ENCODE measurements at regions of chr2 and their contacts with region 1.

Region 1: DNA sequence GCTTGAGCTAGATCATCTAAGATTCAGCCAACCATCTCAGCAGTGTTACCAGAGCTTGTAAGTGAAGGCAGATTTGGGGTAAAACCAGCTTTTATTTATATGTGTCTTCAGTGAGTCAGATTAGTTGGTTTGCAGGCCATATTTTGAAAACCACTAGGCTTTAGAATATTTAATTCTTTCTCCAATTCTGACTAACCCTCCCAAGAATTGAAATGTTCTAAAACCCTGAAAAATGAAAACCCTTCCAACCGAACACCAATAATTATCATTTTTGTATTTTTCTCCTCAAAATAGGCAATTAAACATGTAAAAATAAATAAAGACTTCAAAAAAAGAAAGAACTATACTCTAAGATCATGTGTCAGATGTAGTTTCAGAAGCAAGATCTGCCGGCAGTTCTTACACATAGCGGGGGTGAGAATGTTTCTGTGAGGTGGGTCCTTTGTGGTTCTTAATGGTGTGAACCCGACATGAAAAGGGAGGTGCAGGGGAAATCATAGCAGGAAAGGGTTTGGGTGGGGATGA is 14.2 kb downstream of the PLEK start:
- DNase-seq: no peak
- H3K4me3 ChIP-seq: no peak overlapping the region
- H3K27ac ChIP-seq: peak overlapping the region in 6 of 8 donors; percentile 5 to 87 (median 56)
- H3K4me1 ChIP-seq: peaks cover 8 to 99% (median 76%) of the 10 kb centered on the region in 6 donors
- H3K27me3 ChIP-seq: no peaks in the 10 kb centered on the region
- CTCF ChIP-seq: no peak
- POLR2A ChIP-seq: no peak

Region 2: GRCh38 chr2:68317971-68318913 is 61.0 kb before region 1 on chr2:
- intact Hi-C with region 1: no loop called
- DNase-seq: no peak
- H3K4me3 ChIP-seq: peak overlapping the region; percentile 56 to 86 (median 66)
- H3K27ac ChIP-seq: peak overlapping the region; percentile 69 to 94 (median 92)
- H3K4me1 ChIP-seq: peaks cover 8 to 46% (median 28%) of the 10 kb centered on the region in 6 donors
- H3K27me3 ChIP-seq: peaks cover 0 to 36% (median 12%) of the 10 kb centered on the region in 7 donors
- CTCF ChIP-seq: no peak
- POLR2A ChIP-seq: no peak

Region 3: DNA sequence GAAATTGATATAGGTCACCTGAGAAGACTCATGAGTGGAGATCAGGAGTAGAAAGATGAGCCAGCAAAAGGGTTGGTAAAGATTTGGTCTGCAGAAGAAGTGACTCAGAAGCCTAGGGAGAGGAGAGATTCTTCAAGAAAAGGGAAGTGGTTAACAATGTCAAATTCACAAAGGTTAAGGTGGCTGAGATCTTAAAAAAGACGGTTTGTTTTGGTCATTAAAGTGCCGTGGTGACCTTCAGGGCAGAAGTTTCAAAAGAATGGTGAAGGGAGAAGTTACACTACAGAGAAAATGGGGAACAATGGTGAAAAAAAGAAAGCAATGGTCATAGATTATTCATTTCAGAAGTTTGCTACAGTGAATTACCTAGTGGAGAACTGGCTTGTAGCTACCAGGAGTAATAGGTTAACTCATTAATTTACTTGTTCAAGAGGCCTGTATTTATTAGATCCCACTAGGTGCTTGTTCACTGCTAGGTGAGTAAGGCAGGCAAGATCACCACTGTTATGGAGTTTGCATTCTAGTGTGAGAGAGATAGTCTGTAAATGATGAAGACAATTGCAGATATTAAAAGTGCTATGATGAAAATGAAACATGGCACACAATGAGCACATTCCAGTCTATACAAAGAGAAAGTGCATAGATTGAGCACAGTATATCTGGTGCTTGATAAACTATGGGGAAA is 44.9 kb after region 1 on chr2:
- intact Hi-C with region 1: loop called (anchors 10 kb)
- DNase-seq: no peak
- H3K4me3 ChIP-seq: peak overlapping the region in 1 of 8 donors; percentile 25
- H3K27ac ChIP-seq: peak overlapping the region; percentile 1 to 83 (median 73)
- H3K4me1 ChIP-seq: peaks cover 34 to 94% (median 71%) of the 10 kb centered on the region in 6 donors
- H3K27me3 ChIP-seq: no peaks in the 10 kb centered on the region
- CTCF ChIP-seq: no peak
- POLR2A ChIP-seq: no peak

Region 4: GRCh38 chr2:68506170-68506569 is 126.9 kb after region 1 on chr2:
- intact Hi-C with region 1: no loop called
- DNase-seq: no peak
- H3K4me3 ChIP-seq: no peak overlapping the region
- H3K27ac ChIP-seq: no peak overlapping the region
- H3K4me1 ChIP-seq: no peaks in the 10 kb centered on the region
- H3K27me3 ChIP-seq: no peaks in the 10 kb centered on the region
- CTCF ChIP-seq: no peak
- POLR2A ChIP-seq: no peak

Measured in spleen (tissue), 13 donors.